ENCODE measurements at regions of chr4 and their contacts with region 1.

Region 1: DNA sequence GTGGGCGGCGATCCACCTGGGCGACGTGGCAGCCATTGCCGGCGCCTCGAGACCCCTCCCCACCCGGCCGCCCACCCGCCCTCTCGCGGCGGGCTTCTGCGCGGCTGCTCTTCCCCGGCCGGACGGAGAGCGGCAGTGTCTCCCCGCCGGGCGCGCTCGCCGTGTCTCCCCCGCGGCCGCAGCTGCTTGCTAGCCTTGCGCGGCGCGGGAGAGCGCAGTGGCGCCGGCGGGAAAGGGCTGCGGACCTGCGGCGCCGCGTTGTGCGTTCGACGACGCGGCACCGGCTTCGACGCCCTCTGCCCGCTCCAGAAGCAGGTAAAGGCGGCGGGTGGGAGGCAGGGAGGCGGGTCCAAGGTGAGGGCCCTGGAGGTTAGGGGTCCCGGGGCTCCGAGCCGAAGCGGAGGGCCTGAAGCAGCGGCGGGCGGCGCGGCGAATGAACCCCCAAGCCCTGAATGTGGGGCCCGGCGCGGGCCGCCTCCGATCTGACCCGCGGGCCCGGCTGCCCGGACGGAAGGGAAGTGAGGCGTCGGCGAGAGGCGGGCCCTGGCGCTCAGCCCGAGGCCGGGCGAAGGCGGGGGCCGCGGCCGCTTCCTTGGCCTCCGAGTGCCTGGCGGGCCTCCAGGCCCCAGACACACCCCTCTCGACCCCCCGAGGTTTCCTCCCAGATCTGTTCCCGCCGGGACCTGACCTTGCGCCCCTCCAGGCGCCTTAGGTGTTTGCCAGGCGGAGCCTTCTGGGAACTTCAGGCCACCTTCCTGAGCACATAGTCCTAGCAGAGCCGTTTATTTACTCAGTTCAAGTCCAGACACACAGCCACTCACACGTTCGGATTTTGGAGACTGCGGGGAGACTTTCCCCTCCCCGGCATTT is at the start of gene N4BP2:
- DNase-seq: peak; percentile 59 to 71 (median 61)
- H3K4me3 ChIP-seq: peak within 1 kb of the TSS; percentile 80 to 92 (median 88)
- H3K4me3 Mint-ChIP-seq: peak within 1 kb of the TSS; percentile 95 to 97
- H3K27ac ChIP-seq: peak within 1 kb of the TSS; percentile 95 to 98
- H3K27ac Mint-ChIP-seq: peak within 1 kb of the TSS; percentile 97 to 100 (median 99)
- H3K4me1 ChIP-seq: peaks cover 23 to 36% of the 10 kb centered on the region in 2 donors
- H3K4me1 Mint-ChIP-seq: peaks cover 29% of the 10 kb centered on the region
- H3K27me3 ChIP-seq: peaks cover 0 to under 1% of the 10 kb centered on the region in 2 donors
- H3K27me3 Mint-ChIP-seq: peaks cover 0 to 8% (median 3%) of the 10 kb centered on the region in 3 donors
- CTCF ChIP-seq: peak; percentile 86
- polyA plus RNA-seq, gene N4BP2: 3.1 to 8.3 (median 4.8) TPM

Region 2: GRCh38 chr4:39697740-39698423 is 359.1 kb before region 1 on chr4 and contains the start of gene UBE2K:
- intact Hi-C with region 1: loop called in 1 of 2 experiments (anchors 10 kb)
- DNase-seq: peak; percentile 80 to 82 (median 81)
- H3K4me3 ChIP-seq: peak within 1 kb of the TSS; percentile 73 to 99 (median 98)
- H3K4me3 Mint-ChIP-seq: peak within 1 kb of the TSS; percentile 96 to 99
- H3K27ac ChIP-seq: peak within 1 kb of the TSS; percentile 84 to 93
- H3K27ac Mint-ChIP-seq: peak within 1 kb of the TSS; percentile 93 to 98 (median 96)
- H3K4me1 ChIP-seq: peaks cover 21 to 34% of the 10 kb centered on the region in 2 donors
- H3K4me1 Mint-ChIP-seq: peaks cover 30% of the 10 kb centered on the region
- H3K27me3 ChIP-seq: no peaks in the 10 kb centered on the region
- H3K27me3 Mint-ChIP-seq: peaks cover 0 to 2% (median 0%) of the 10 kb centered on the region in 3 donors
- CTCF ChIP-seq: no peak
- polyA plus RNA-seq, gene UBE2K: 24.2 to 66.8 (median 50.0) TPM

Region 3: GRCh38 chr4:39977489-39978377 is 79.2 kb before region 1 on chr4 and contains the start of gene PDS5A:
- intact Hi-C with region 1: no loop called
- DNase-seq: peak; percentile 81 to 88 (median 82)
- H3K4me3 ChIP-seq: peak within 1 kb of the TSS; percentile 76 to 92 (median 89)
- H3K4me3 Mint-ChIP-seq: peak within 1 kb of the TSS; percentile 82 to 94
- H3K27ac ChIP-seq: peak within 1 kb of the TSS; percentile 61 to 83
- H3K27ac Mint-ChIP-seq: peak within 1 kb of the TSS; percentile 81 to 93 (median 87)
- H3K4me1 ChIP-seq: peaks cover 8 to 20% of the 10 kb centered on the region in 2 donors
- H3K4me1 Mint-ChIP-seq: peaks cover 13% of the 10 kb centered on the region
- H3K27me3 ChIP-seq: no peaks in the 10 kb centered on the region
- H3K27me3 Mint-ChIP-seq: peaks cover 1 to 2% (median 1%) of the 10 kb centered on the region in 3 donors
- CTCF ChIP-seq: peak; percentile 84
- polyA plus RNA-seq, gene PDS5A: 14.2 to 19.4 (median 17.7) TPM

Region 4: DNA sequence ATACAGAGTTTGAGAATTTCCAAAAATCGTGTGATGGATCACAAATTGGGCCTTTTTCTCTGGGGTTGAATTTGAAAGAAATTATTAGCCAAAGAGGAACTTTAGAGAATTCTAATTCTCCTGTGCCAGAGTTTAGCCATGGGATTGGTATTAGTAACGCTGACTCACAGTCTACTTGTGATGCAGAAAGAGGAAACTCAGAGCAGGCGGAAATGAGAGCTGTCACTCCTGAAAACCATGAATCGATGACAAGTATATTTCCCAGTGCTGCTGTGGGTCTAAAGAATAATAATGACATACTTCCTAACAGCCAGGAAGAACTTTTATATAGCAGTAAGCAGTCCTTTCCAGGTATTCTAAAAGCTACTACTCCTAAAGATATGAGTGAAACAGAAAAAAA is 64.6 kb after region 1 on chr4:
- intact Hi-C with region 1: loop called in 1 of 2 experiments (anchors 5 kb)
- DNase-seq: peak; percentile 88 to 97 (median 97)
- H3K4me3 ChIP-seq: peak overlapping the region in 1 of 3 experiments; percentile 16
- H3K4me3 Mint-ChIP-seq: no peak overlapping the region
- H3K27ac ChIP-seq: peak overlapping the region in 1 of 2 donors; percentile 84
- H3K27ac Mint-ChIP-seq: peak overlapping the region; percentile 73 to 90 (median 86)
- H3K4me1 ChIP-seq: peaks cover 24 to 30% of the 10 kb centered on the region in 2 donors
- H3K4me1 Mint-ChIP-seq: peaks cover 24% of the 10 kb centered on the region
- H3K27me3 ChIP-seq: no peaks in the 10 kb centered on the region
- H3K27me3 Mint-ChIP-seq: no peaks in the 10 kb centered on the region
- CTCF ChIP-seq: no peak

Region 5: DNA sequence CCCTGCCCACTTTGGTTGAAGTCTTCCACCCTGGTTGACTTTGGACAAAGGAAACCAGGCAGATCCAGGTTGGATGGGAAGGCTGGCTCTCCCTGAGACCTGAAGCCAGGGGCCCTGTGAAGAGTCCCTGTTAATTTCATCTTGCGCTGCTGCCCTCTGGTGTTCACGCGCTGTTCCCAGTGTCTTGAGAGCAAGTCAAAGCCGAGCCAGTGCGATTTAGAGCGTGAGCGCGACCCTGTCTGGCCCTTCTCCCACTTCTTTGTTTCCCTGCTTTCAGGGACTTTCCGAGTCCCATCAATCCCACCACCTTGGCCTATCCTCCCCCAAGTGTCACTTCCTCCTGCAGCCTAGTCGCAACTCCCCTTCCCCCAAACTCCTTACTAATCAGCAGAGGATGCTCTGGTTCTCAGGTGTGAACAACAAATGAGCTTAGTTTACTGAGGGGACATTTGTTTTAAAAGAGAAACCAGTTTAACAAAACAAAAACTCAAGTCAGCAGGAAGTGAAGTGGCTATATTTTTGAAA is 252.4 kb after region 1 on chr4:
- intact Hi-C with region 1: loop called in 1 of 2 experiments (anchors 5 kb)
- DNase-seq: peak; percentile 74 to 85 (median 80)
- H3K4me3 ChIP-seq: no peak overlapping the region
- H3K4me3 Mint-ChIP-seq: peak overlapping the region; percentile 60 to 83
- H3K27ac ChIP-seq: peak overlapping the region in 1 of 2 donors; percentile 89
- H3K27ac Mint-ChIP-seq: peak overlapping the region; percentile 87 to 98 (median 97)
- H3K4me1 ChIP-seq: peaks cover 54 to 59% of the 10 kb centered on the region in 2 donors
- H3K4me1 Mint-ChIP-seq: peaks cover 64% of the 10 kb centered on the region
- H3K27me3 ChIP-seq: no peaks in the 10 kb centered on the region
- H3K27me3 Mint-ChIP-seq: peaks cover 7 to 16% (median 8%) of the 10 kb centered on the region in 3 donors
- CTCF ChIP-seq: peak; percentile 87

Region 6: DNA sequence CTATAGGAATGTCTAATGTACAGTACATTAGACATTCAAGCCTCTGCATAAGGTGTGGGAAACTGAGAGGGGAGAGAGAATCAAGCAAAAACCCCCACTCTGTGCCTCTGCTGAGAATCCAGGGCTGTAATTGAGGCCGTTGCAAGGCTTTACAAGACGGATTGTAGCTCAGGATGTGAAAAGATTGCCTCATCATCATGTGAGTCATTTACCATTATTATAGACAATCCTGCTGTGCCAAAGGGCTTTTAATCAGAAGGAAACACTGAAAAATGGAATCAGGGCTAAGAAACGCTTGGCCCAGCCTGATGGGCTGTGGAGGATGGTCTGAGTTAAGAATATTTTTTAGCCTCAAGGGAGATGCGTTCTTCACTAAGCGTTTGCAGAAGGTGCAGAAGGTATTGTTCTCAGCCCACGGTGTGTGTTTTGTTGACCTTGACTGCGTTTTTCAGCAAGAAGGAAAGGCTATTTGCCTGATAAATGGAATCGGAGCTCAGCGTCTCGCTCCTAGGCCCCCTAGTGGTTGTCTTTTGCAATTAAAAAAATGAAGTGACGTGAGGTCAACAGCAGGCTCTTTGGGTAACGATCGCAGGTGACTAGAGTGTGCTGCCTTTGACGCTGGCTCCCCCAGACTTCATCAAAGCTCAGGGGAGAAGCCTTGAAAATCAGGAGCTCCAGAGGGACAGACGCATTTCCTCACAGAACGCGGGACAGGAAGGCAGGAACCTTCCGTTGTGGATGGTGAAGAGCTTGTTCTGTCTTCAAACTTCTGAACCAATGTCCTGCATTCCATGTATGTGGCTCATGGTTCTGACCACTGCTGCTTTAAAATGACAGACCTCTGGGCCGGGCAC is 260.1 kb after region 1 on chr4:
- intact Hi-C with region 1: loop called in 1 of 2 experiments (anchors 5 kb)
- DNase-seq: peak; percentile 86 to 94 (median 91)
- H3K4me3 ChIP-seq: peak overlapping the region; percentile 14 to 58 (median 20)
- H3K4me3 Mint-ChIP-seq: peak overlapping the region; percentile 72 to 84
- H3K27ac ChIP-seq: peak overlapping the region; percentile 48 to 92
- H3K27ac Mint-ChIP-seq: peak overlapping the region; percentile 98 to 100 (median 98)
- H3K4me1 ChIP-seq: peaks cover 20 to 30% of the 10 kb centered on the region in 2 donors
- H3K4me1 Mint-ChIP-seq: peaks cover 36% of the 10 kb centered on the region
- H3K27me3 ChIP-seq: no peaks in the 10 kb centered on the region
- H3K27me3 Mint-ChIP-seq: peaks cover 0 to 6% (median 2%) of the 10 kb centered on the region in 3 donors
- CTCF ChIP-seq: peak; percentile 87

Region 7: DNA sequence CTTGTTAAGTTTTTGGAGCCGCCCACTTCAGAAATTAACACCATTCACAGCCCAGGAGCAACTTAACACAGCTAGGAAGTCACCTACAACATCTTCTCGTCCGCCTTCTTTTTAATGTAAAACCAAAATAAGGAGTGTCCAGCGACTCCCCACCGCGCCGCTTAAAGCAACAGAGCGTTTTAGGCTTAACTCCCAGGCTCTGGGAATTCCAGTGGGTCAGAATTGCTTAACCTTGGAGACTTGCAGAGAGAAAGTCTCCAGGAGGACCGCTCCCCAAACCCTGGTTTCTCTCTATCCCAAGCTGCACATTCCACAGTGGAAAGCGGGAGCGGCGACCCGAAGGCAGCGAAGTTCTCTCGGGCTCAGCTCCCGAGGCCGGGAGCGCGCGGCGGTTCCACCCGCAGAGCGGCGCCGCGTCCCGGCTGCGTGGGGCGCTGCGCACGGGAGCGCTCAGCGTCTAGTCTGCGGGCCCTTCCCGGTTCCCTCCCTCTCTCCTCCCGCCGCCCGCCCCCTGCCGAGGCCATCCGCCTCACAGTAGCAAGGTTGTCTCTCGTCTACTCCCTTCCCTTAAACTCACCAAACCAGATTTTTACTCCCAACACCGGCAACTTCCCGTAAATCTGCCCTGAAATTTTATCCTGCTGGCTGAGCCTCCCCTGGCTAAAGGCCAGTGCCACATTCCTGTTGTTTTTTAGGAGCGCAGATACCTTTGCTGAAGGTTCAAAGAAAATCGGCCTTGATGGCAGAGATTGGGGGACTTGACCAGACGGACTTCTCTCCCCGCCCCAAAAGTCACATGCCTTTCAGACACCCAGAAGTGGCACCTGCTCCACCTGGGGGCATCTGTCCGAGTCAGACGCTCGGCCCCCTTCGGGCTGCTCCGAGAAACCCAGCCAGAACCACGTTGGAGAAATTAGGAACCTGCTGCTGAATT is 572.7 kb after region 1 on chr4 and contains the start of gene RBM47:
- intact Hi-C with region 1: loop called in 1 of 2 experiments (anchors 10 kb)
- DNase-seq: peak; percentile 62 to 75 (median 66)
- H3K4me3 ChIP-seq: peak within 1 kb of the TSS; percentile 91 to 99 (median 97)
- H3K4me3 Mint-ChIP-seq: peak within 1 kb of the TSS; percentile 98 to 100
- H3K27ac ChIP-seq: peak within 1 kb of the TSS; percentile 97 to 100
- H3K27ac Mint-ChIP-seq: peak within 1 kb of the TSS; percentile 99 to 100 (median 99)
- H3K4me1 ChIP-seq: peaks cover 51 to 70% of the 10 kb centered on the region in 2 donors
- H3K4me1 Mint-ChIP-seq: peaks cover 59% of the 10 kb centered on the region
- H3K27me3 ChIP-seq: no peaks in the 10 kb centered on the region
- H3K27me3 Mint-ChIP-seq: peaks cover 0 to 3% (median 0%) of the 10 kb centered on the region in 3 donors
- CTCF ChIP-seq: peak; percentile 32
- polyA plus RNA-seq, gene RBM47: 79.5 to 101 (median 92.8) TPM